ENCODE measurements at regions of chr5 and their contacts with region 1.

Region 1: GRCh38 chr5:60161340-60161934 is 267.9 kb upstream of the PDE4D start:
- DNase-seq: no peak
- H3K4me3 ChIP-seq: no peak overlapping the region
- H3K27ac ChIP-seq: no peak overlapping the region
- H3K4me1 ChIP-seq: no peaks in the 10 kb centered on the region
- H3K27me3 ChIP-seq: no peaks in the 10 kb centered on the region
- CTCF ChIP-seq: no peak
- POLR2A ChIP-seq: no peak

Region 2: GRCh38 chr5:58582803-58583491 is 1578.5 kb before region 1 on chr5 and contains the start of gene RAB3C:
- intact Hi-C with region 1: loop called (anchors 10 kb)
- DNase-seq: no peak
- H3K4me3 ChIP-seq: peak within 1 kb of the TSS; percentile 24 to 40
- H3K27ac ChIP-seq: no peak within 1 kb of the TSS
- H3K4me1 ChIP-seq: peaks cover 18% of the 10 kb centered on the region
- H3K27me3 ChIP-seq: no peaks in the 10 kb centered on the region
- CTCF ChIP-seq: no peak
- POLR2A ChIP-seq: no peak
- total RNA-seq, gene RAB3C: 2.5 TPM

Measured in vagina (tissue), 2 donors.